SK-N-SH (cell line): ENCODE measurements at regions of chr19 and their contacts with region 1.

Region 1: DNA sequence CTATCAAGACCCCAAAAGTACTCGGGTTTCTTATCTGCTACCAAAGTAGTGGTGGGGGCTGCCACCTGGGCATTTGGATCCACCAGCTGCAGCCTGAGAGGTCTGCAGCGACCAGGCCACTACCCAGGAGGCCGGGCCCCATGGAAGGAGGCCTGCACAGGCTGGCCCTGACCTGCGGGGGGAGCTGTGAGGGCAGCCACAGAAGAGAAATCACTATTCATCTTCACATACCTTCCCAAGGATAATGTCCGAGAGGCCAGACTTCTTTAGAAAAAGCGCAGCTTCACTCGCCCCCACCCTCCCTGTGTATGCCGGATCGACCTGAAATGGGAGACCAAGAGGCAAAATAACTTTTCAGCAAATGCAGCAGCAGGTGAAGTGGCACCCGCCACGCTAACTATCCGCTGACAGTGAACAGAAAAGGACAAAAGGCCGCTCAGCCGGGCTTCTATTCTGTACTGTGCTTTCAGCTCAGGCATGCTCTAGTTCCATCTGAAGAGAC is 30.1 kb downstream of the EPS15L1 start:
- DNase-seq: peak; percentile 75
- H3K4me3 ChIP-seq: no peak overlapping the region
- H3K27ac ChIP-seq: no peak overlapping the region
- H3K4me1 ChIP-seq: peaks cover 0 to 27% of the 10 kb centered on the region in 2 experiments; a peak in 1 of 4 replicates
- H3K27me3 ChIP-seq: no peaks in the 10 kb centered on the region
- CTCF ChIP-seq: peak; percentile 70
- EP300 ChIP-seq: no peak
- RAD21 ChIP-seq: peak; percentile 71

Region 2: DNA sequence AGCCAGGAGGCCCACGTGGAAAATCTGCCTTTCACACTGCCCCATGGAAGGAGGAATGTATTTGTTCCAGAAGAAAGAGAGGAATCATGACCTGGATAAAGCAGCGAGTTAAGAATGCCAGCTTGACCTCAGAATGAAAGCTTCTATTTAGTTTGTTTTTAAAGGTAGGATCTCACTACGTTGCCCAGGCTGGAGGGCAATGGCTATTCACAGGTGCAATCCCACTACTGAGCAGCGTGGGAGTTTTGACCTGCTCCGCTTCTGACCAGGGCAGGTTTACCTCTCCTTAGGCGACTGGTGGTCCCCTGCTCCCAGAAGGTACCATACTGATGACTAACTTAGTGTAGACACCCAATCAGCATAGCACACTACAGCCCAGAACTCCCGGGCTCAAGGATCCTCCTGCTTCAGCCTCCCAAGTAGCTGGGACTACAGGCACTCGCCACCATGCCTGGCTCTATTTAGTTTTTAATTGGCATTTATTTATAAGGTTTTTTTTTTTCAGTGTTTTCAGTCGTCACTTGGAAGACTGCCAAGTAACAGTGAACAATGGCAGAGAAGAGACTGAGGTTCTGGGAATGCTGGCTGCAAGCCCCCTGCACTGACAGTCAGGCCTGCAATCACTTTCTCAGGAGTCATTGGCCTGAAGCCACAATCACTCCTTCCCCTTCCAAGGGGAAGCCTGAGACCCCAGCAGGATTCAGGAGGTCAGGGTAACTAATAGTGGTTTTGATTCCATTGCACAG is 43.0 kb before region 1 on chr19:
- CTCF ChIA-PET with region 1: no interaction called
- POLR2A ChIA-PET with region 1: no interaction called
- DNase-seq: no peak
- H3K4me3 ChIP-seq: no peak overlapping the region
- H3K27ac ChIP-seq: no peak overlapping the region
- H3K4me1 ChIP-seq: no peaks in the 10 kb centered on the region
- H3K27me3 ChIP-seq: no peaks in the 10 kb centered on the region
- CTCF ChIP-seq: no peak
- EP300 ChIP-seq: no peak
- RAD21 ChIP-seq: no peak

Region 3: DNA sequence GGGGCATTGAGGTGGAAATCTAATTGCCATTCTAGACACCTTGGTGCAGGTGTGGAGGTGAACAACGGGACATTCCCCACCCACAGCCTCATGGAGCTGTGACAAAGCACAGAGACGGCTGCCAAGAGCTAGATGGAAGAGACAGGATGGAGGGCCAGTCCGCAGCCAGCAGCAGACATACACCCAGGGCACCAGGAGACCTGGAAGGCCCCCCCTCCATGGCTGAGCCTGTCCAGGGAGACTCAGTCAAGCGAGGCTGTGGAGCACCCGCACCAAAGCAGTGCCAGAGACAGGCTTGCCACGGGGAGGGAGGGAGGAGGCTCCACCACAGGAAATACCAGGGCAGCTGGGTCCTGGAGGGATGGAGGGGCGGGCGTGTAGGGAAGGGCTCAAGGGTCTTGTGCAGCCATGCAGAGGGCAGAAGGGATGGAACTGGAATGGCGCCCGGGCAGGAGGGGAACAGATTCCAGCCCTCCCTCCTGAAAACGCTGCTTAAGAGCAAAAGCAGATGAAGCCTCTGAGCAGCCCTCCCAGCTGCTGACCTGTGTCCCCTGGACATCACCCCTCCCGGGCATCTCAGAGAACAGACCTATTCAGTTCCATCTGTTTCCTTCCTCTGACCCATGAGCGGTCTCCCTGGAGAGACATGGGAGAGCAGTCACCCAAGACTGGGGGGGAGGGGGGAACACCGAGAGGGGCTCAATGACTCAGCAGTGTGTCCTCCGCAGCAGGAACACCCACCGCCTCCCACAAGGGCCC is 15.7 kb after region 1 on chr19:
- CTCF ChIA-PET with region 1: interaction called, 45 read pairs
- POLR2A ChIA-PET with region 1: no interaction called
- DNase-seq: peak; percentile 87
- H3K4me3 ChIP-seq: peak overlapping the region; percentile 21 to 52
- H3K27ac ChIP-seq: peak overlapping the region; percentile 63 to 94
- H3K4me1 ChIP-seq: peaks cover 23 to 43% of the 10 kb centered on the region in 2 experiments; a peak in 3 of 4 replicates
- H3K27me3 ChIP-seq: no peaks in the 10 kb centered on the region
- CTCF ChIP-seq: no peak
- EP300 ChIP-seq: no peak; a peak in 1 of 4 replicates
- RAD21 ChIP-seq: peak; percentile 13; the same call in 1 of the 2 replicates

Region 4: DNA sequence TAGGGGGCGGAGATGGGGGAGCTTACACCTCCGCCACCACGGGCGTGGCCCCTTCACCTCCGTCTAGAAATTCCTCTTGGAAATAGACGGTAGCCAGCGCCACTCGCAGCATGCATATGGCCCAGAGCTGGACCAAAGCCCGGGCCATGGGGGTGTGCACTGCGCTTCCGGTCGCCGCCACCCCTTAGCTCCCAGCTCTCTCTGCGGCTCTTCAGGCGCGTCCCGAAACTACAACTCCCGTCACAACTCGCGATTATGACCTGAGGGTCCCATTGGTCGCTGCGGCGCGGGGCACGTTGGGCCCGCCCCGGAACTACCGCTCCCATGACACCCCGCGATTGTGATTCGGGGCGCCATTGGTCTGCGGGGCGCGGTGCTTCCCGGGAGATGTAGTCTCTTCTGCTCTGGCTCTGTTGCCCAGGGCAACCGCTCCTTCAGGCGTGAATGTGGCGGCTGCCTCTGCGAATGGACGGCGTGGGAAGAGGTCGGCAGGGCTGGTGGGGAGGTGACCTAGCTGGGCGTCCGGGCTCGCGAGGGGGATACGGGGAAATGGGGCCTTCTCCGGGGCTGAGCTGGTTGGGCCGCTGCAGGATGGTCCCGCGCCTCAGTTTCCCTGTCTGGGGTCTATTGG is 54.4 kb after region 1 on chr19 and contains the starts of genes C19orf44 and CALR3:
- CTCF ChIA-PET with region 1: interaction called, 12 read pairs
- POLR2A ChIA-PET with region 1: interaction called, 6 read pairs
- DNase-seq: peak; percentile 96
- H3K4me3 ChIP-seq: peak within 1 kb of the TSS; percentile 49 to 78
- H3K27ac ChIP-seq: peak within 1 kb of the TSS; percentile 71 to 74
- H3K4me1 ChIP-seq: no peaks in the 10 kb centered on the region; a peak in 1 of 4 replicates
- H3K27me3 ChIP-seq: no peaks in the 10 kb centered on the region
- CTCF ChIP-seq: no peak
- EP300 ChIP-seq: no peak
- RAD21 ChIP-seq: peak; percentile 44
- polyA plus RNA-seq, gene C19orf44: 5.1 and 6.0 TPM in 2 replicates
- polyA plus RNA-seq, gene CALR3: not detected in 2 replicates